Dorsolateral prefrontal cortex (tissue), 120 donors: ENCODE measurements at regions of chr7 and their contacts with region 1.

Region 1: GRCh38 chr7:113421696-113422330 is 303.5 kb upstream of the SMIM30 start:
- DNase-seq: peak; percentile 30 to 86 (median 68)
- H3K4me3 ChIP-seq: peak overlapping the region in 1 of 59 donors; percentile 16
- H3K27ac ChIP-seq: no peak overlapping the region
- H3K27me3 ChIP-seq: no peaks in the 10 kb centered on the region
- CTCF ChIP-seq: peak; percentile 54 to 93 (median 86)

Region 2: GRCh38 chr7:112550468-112551060 is 871.2 kb before region 1 on chr7:
- intact Hi-C with region 1: loop called in 1 of 2 experiments (anchors 5 kb)
- DNase-seq: no peak
- H3K4me3 ChIP-seq: no peak overlapping the region
- H3K27ac ChIP-seq: no peak overlapping the region
- H3K27me3 ChIP-seq: peaks cover 0 to 9% (median 0%) of the 10 kb centered on the region in 45 donors
- CTCF ChIP-seq: peak in 54 of 56 donors; percentile 44 to 83 (median 68)

Region 3: DNA sequence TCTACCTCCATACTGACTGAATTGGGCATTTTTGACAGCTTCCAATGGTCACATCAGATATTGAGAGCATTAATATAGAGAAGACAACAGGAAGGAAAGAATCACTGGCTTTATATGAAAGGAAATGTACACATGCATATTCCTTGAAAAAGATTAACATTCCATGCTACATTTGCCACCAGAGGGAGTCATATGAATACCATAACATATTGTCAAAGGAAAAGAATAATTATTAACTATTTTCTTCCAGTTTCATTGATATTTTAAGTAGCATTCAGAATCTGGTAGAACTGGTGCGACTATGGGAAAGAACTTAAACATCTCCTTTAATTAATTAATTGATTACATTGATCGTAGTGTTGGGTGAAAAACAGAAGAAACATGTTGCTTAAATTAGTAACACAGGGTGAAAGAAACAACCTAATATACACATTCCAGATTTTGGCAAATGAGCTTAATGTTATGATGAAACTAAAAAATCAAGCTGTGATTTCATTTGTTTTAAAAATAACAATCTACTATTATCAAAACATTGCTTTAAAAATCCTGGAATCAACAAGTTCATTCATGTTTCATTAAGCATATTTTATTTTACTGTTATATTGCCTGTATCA is 406.7 kb before region 1 on chr7:
- intact Hi-C with region 1: loop called in 1 of 2 experiments (anchors 5 kb)
- DNase-seq: no peak
- H3K4me3 ChIP-seq: no peak overlapping the region
- H3K27ac ChIP-seq: no peak overlapping the region
- H3K27me3 ChIP-seq: no peaks in the 10 kb centered on the region
- CTCF ChIP-seq: peak; percentile 36 to 78 (median 58)

Region 4: GRCh38 chr7:113904521-113904920 is 482.7 kb after region 1 on chr7:
- intact Hi-C with region 1: no loop called
- DNase-seq: no peak
- H3K4me3 ChIP-seq: no peak overlapping the region
- H3K27ac ChIP-seq: no peak overlapping the region
- H3K27me3 ChIP-seq: peaks cover 0 to 4% (median 0%) of the 10 kb centered on the region in 45 donors
- CTCF ChIP-seq: no peak